Activated T-helper 1 cell treated with anti-CD3 and anti-CD28 coated beads, Interleukin-12 subunit alpha, Interleukin-12 subunit beta, Interleukin-2, Interleukin-4 antibody, amounts not matched to agents 30 ng/mL and 10 ng/mL and 1 ng/mL, durations not matched to agents 14 hours and 24 hours and 36 hours (primary cell): ENCODE measurements at regions of chr10 and their contacts with region 1.

Region 1: GRCh38 chr10:22630234-22631174 is 83.9 kb downstream of the PIP4K2A start:
- DNase-seq: no peak
- H3K4me3 Mint-ChIP-seq: peak overlapping the region; percentile 74
- H3K27ac Mint-ChIP-seq: peak overlapping the region; percentile 100
- H3K4me1 Mint-ChIP-seq: peaks cover 94% of the 10 kb centered on the region
- H3K27me3 Mint-ChIP-seq: no peaks in the 10 kb centered on the region

Region 2: GRCh38 chr10:22308390-22308789 is 322.1 kb before region 1 on chr10:
- intact Hi-C with region 1: loop called (anchors 2 kb)
- DNase-seq: peak; percentile 41
- H3K4me3 Mint-ChIP-seq: no peak overlapping the region
- H3K27ac Mint-ChIP-seq: peak overlapping the region; percentile 71
- H3K4me1 Mint-ChIP-seq: peaks cover 29% of the 10 kb centered on the region
- H3K27me3 Mint-ChIP-seq: peaks cover 1% of the 10 kb centered on the region

Region 3: DNA sequence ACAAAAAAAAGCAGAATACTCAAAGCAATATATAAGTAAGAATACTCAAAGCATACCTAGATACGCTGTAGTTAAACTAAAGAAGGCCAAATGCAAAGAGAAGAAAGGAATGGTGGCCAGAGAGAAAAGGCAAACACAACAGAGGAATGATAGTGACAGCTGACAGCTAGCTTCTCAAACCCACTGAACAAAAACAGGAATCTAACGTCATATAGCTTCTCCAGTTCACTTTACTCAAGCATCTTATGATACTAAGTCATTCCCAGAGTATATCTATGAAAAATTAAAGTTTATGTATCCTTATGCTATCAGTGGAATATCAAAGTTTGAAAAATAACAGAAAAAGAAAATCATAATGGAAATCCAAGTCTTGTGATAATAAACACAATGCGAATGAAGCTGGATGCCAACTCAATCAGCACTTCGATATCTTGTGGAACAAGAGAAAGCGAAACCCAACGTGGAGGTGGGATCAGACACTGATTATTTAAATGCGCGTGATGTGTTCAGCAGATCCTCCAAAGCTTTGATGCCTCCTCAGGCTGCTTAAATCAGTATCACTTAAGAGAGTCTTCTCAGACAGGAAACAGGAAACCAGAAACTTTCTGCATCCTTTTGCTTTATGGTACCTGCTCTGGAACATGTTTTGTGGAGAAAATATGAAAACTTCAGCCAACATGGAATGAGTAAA is 18.9 kb before region 1 on chr10:
- intact Hi-C with region 1: loop called (anchors 1 kb)
- DNase-seq: peak; percentile 72
- H3K4me3 Mint-ChIP-seq: peak overlapping the region; percentile 38
- H3K27ac Mint-ChIP-seq: peak overlapping the region; percentile 21
- H3K4me1 Mint-ChIP-seq: peaks cover 90% of the 10 kb centered on the region
- H3K27me3 Mint-ChIP-seq: no peaks in the 10 kb centered on the region

Region 4: DNA sequence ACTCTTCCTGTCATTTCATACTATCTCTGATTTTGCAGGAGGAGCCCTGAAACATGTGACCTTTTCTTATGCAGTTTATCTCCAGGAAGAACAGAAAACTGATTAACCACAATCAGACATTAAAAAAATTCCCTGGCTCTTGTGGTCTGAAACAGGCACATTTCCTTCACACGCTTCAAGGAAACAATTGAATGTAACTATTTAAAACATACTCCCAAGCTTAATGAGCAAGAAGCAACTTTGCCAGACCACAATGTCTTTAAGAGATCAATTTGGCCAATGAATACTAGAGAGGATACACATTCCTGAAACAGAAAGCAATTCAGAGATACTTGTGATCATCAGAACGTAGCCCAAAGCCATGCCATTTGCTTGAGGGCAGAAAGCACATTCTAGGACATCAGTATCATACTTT is 18.1 kb after region 1 on chr10:
- intact Hi-C with region 1: loop called (anchors 1 kb)
- DNase-seq: no peak
- H3K4me3 Mint-ChIP-seq: peak overlapping the region; percentile 75
- H3K27ac Mint-ChIP-seq: peak overlapping the region; percentile 96
- H3K4me1 Mint-ChIP-seq: peaks cover 91% of the 10 kb centered on the region
- H3K27me3 Mint-ChIP-seq: no peaks in the 10 kb centered on the region

Region 5: DNA sequence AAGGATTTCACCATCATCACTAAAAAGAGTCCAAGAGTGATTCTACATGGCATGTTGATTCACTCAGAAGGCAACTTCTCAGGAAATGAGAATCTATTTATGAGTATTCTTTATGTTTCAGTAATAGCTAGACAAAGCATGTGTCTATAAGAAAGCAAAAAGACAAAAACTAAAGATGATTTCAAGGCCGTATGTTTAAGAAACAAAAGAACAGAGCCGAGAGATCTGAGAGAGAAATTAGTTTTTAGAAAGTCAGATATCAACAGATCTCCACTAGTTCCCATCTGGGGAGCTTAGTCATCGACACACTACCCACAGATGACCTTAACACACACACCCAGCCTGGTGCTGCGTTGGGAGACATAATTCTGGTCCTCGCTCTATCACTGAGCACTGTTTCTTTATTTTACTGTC is 62.9 kb after region 1 on chr10:
- intact Hi-C with region 1: loop called (anchors 1 kb)
- DNase-seq: no peak
- H3K4me3 Mint-ChIP-seq: peak overlapping the region; percentile 68
- H3K27ac Mint-ChIP-seq: peak overlapping the region; percentile 91
- H3K4me1 Mint-ChIP-seq: peaks cover 67% of the 10 kb centered on the region
- H3K27me3 Mint-ChIP-seq: no peaks in the 10 kb centered on the region